ENCODE measurements at regions of chr6 and their contacts with region 1.

Region 1: GRCh38 chr6:10434692-10435376 is 20.0 kb upstream of the TFAP2A start:
- DNase-seq: no peak
- H3K4me3 ChIP-seq: no peak overlapping the region
- H3K27ac ChIP-seq: no peak overlapping the region
- H3K4me1 ChIP-seq: no peaks in the 10 kb centered on the region
- H3K27me3 ChIP-seq: peaks cover 0 to 2% (median 0%) of the 10 kb centered on the region in 3 donors
- CTCF ChIP-seq: peak in 3 of 4 experiments; percentile 11 to 64 (median 23)
- EP300 ChIP-seq: no peak
- POLR2A ChIP-seq: no peak

Region 2: DNA sequence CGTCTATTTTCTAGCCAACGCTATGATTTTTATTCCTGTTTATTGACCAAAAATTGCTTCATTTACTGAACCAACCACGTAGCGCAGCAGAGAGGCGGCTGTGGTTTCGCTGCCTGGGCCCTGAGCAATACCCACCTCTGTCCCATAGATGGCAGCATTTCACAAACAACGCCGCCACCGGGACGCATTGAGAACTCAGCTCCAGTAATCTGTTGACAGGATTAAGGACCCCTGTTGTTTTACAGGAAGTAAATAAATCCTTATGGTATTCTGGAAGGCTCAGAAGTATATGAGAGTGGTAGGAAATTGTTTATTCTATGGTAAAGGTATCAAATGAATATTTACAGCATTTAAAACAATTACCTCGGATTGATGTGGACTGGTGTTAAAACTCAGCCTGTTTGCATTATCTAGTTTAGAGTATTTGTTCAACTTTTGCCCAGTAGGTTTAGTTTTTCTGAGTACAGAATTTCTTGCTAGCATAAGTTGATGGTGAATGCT is 1451.6 kb before region 1 on chr6:
- intact Hi-C with region 1: loop called (anchors 2 kb)
- DNase-seq: peak; percentile 71
- H3K4me3 ChIP-seq: no peak overlapping the region
- H3K27ac ChIP-seq: no peak overlapping the region
- H3K4me1 ChIP-seq: no peaks in the 10 kb centered on the region
- H3K27me3 ChIP-seq: no peaks in the 10 kb centered on the region
- CTCF ChIP-seq: peak; percentile 64 to 93 (median 74)
- EP300 ChIP-seq: no peak
- POLR2A ChIP-seq: no peak

Region 3: DNA sequence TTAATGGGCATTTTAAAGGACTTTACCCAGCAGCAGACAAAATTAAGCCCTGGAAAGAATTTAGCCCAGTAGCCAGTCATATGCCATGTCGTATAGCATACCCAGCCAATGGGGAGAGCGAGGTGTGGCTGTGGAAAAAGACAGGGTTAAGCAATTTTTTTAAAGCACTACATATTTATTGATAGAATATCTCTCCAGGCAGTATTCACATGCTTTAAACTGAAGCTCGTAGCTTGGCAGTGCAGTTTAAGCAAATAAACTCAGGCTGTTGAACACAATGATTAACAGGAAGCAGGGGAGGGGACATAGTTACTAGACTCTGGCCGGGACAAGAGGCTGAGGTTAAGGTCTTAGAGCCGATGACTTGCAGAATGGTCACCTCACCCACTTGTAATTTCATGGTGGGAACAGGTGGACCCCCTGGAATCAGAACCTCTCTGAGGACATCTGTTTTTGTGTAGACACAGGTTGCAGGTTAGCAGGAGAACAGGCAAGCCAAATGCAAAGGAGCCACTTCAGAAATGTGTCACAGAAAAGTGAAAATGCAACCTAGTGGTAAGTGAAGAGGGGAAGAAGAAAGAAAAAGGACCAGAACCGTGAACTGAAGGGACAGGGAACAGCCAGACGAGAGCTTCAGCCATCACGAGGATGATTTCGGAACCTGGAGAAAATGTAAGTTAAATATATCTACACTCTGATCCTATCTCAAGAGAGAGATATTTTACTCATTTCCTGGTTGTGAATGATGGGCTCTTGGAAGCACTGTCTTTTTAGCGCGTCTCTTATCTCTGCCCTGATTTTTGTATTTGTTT is 93.5 kb after region 1 on chr6:
- intact Hi-C with region 1: no loop called
- DNase-seq: no peak
- H3K4me3 ChIP-seq: peak overlapping the region in 3 of 4 donors; percentile 3 to 27 (median 20)
- H3K27ac ChIP-seq: peak overlapping the region; percentile 2 to 63 (median 12)
- H3K4me1 ChIP-seq: peaks cover 0 to 5% (median 0%) of the 10 kb centered on the region in 4 donors
- H3K27me3 ChIP-seq: no peaks in the 10 kb centered on the region
- CTCF ChIP-seq: no peak
- EP300 ChIP-seq: no peak
- POLR2A ChIP-seq: peak in 1 of 2 donors; percentile 12

Region 4: GRCh38 chr6:10555625-10556309 is 120.9 kb after region 1 on chr6:
- intact Hi-C with region 1: no loop called
- DNase-seq: peak; percentile 84
- H3K4me3 ChIP-seq: peak overlapping the region; percentile 41 to 54 (median 50)
- H3K27ac ChIP-seq: peak overlapping the region; percentile 81 to 87 (median 85)
- H3K4me1 ChIP-seq: peaks cover 0 to 59% (median 36%) of the 10 kb centered on the region in 4 donors
- H3K27me3 ChIP-seq: no peaks in the 10 kb centered on the region
- CTCF ChIP-seq: no peak
- EP300 ChIP-seq: no peak
- POLR2A ChIP-seq: peak in 1 of 2 donors; percentile 27